ENCODE measurements at regions of chr5 and their contacts with region 1.

Region 1: GRCh38 chr5:177035976-177036375 is 13.5 kb downstream of the ZNF346 start:
- DNase-seq: no peak
- ATAC-seq: no peak
- H3K4me3 ChIP-seq: no peak overlapping the region
- H3K27ac ChIP-seq: no peak overlapping the region
- H3K4me1 ChIP-seq: no peaks in the 10 kb centered on the region
- H3K27me3 ChIP-seq: no peaks in the 10 kb centered on the region
- CTCF ChIP-seq: no peak

Region 2: DNA sequence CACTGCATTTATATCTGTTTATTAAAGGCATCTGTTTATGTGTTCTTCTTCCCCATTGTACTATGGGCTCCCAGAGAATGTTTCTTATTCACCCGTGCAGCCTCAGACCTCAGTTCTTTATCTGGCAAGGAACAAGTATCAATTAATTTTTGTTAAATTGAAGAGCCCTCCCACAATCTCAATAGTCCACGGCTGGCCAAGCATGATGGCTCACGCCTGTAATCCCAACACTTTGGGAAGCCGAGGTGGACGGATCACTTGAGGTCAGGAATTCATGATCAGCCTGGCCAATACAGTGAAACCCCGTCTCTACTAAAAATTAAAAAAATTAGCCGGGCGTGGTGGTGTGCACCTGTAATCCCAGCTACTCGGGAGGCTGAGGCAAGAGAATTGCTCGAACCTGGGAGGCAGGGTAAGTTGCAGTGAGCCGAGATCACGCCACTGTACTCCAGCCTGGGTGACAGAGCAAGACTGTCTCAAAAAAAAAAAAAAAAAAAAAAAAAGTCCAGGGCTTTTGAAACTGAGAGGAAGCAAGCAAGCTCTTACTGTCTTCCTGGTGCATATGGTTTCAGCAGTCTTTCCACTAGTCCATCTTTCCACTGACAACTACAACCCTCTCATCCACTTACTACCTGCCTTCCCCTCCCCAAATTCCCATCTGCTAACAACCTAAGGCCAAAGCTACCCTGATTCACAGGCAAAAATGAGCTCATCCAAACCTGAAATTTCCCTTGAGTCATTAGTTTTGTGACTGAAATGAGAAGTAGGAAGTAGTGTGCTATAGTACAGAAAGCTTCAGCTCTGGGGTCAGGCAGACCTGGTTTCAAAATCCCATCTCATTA is 134.5 kb before region 1 on chr5:
- CTCF ChIA-PET with region 1: no interaction called
- POLR2A ChIA-PET with region 1: no interaction called
- intact Hi-C with region 1: no loop called
- DNase-seq: no peak
- ATAC-seq: no peak
- H3K4me3 ChIP-seq: no peak overlapping the region
- H3K27ac ChIP-seq: no peak overlapping the region
- H3K4me1 ChIP-seq: no peaks in the 10 kb centered on the region
- H3K27me3 ChIP-seq: no peaks in the 10 kb centered on the region
- CTCF ChIP-seq: no peak

Region 3: DNA sequence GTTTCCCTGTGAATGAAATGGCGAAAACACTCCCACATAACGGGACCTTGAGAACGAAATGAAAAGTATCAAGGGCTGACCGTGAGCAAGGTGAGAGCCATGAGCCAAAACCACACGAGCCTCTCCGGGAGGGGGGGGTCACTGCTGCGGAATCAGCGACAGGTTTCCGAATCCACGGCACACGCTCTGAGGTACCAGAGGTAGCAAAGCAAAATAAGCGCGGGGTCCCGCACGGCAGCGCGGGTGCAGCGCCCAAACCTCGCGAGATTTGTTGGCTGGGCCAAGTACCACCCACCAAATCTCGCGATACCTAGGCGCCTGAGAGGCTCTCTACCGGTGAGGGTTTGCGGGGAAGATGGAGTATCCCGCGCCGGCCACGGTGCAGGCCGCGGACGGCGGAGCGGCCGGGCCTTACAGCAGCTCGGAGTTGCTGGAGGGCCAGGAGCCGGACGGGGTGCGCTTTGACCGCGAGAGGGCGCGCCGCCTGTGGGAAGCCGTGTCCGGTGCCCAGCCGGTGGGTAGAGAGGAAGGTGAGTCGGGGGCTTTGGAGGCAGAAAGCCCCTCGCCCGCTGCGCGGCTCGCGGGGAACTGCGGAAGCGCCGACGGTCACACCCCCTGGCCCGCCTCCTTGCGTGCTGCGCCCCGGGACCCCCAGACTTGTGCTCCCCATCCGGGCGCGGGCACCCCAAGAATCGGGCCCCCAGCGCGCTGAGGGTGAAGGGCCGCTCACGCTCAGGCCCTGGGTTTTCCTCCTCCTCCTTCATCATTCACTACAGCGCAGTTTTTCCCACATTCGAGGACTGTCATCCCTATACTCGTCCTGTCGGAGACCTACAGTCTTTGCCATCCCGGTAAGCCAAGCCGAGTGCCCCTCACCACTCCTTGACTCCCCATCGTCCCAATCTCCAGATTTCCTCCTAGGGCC is 13.3 kb before region 1 on chr5 and contains the start of gene ZNF346:
- CTCF ChIA-PET with region 1: interaction called, 10 read pairs
- POLR2A ChIA-PET with region 1: no interaction called
- intact Hi-C with region 1: no loop called
- DNase-seq: peak; percentile 98
- ATAC-seq: peak; percentile 97
- H3K4me3 ChIP-seq: peak within 1 kb of the TSS; percentile 76
- H3K27ac ChIP-seq: no peak within 1 kb of the TSS
- H3K4me1 ChIP-seq: 0 out of 2 replicates have a peak, but pooled peaks cover 5% of the 10 kb centered on the region
- H3K27me3 ChIP-seq: no peaks in the 10 kb centered on the region
- CTCF ChIP-seq: peak; percentile 62
- total RNA-seq, gene ZNF346: 33.9 and 38.9 TPM in 2 replicates

Measured in PC-3 (cell line).